ENCODE measurements at regions of chr15 and their contacts with region 1.

Region 1: GRCh38 chr15:67521029-67521811 is at the start of gene C15orf61:
- DNase-seq: no peak
- H3K4me3 ChIP-seq: peak within 1 kb of the TSS; percentile 70
- H3K27me3 ChIP-seq: no peaks in the 10 kb centered on the region
- CTCF ChIP-seq: no peak
- polyA plus RNA-seq, gene C15orf61: 2.3 and 3.1 TPM in 2 replicates

Region 2: GRCh38 chr15:66761726-66762589 is 759.3 kb before region 1 on chr15:
- CTCF ChIA-PET with region 1: no interaction called
- POLR2A ChIA-PET with region 1: interaction called, 12 read pairs
- DNase-seq: no peak
- H3K4me3 ChIP-seq: no peak overlapping the region
- H3K27me3 ChIP-seq: no peaks in the 10 kb centered on the region
- CTCF ChIP-seq: no peak

Region 3: GRCh38 chr15:67125589-67126502 is 395.4 kb before region 1 on chr15:
- CTCF ChIA-PET with region 1: no interaction called
- POLR2A ChIA-PET with region 1: no interaction called
- DNase-seq: peak; percentile 96
- H3K4me3 ChIP-seq: peak overlapping the region; percentile 5; the same call in 1 of the 2 replicates
- H3K27me3 ChIP-seq: no peaks in the 10 kb centered on the region
- CTCF ChIP-seq: no peak

Region 4: DNA sequence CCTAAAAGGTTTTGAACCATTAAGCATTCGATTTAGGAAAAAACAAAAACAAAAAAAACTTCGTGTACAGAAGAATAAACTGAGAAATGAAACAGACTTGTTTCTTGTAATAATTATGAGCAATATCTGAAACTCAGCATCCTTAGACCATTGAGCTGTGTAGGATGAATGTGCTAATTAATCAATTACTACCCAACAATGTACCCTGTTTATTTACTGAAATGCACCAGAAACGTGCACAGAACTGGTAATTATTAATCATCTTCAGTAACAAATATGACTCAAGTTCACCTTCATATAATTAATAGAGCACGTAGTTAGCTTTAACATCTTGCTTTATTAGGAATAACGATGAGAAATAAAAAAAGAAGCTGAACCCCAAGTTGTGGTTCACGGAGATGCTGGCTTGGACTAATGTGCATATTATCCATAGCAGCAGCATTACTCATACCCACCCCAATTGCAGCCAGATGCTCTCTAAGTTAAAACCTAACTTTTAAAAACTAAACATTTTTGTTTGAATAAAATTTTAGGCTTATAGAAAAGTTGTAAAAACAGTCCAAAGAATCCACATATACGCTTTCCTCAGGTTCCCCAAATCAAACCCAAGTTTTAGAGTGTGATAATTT is 10.5 kb before region 1 on chr15:
- CTCF ChIA-PET with region 1: interaction called, 3 read pairs
- POLR2A ChIA-PET with region 1: interaction called, 25 read pairs
- DNase-seq: peak; percentile 65
- H3K4me3 ChIP-seq: no peak overlapping the region
- H3K27me3 ChIP-seq: no peaks in the 10 kb centered on the region
- CTCF ChIP-seq: no peak